Left ventricle myocardium inferior (tissue), 1 donor: ENCODE measurements at regions of chr12 and their contacts with region 1.

Region 1: DNA sequence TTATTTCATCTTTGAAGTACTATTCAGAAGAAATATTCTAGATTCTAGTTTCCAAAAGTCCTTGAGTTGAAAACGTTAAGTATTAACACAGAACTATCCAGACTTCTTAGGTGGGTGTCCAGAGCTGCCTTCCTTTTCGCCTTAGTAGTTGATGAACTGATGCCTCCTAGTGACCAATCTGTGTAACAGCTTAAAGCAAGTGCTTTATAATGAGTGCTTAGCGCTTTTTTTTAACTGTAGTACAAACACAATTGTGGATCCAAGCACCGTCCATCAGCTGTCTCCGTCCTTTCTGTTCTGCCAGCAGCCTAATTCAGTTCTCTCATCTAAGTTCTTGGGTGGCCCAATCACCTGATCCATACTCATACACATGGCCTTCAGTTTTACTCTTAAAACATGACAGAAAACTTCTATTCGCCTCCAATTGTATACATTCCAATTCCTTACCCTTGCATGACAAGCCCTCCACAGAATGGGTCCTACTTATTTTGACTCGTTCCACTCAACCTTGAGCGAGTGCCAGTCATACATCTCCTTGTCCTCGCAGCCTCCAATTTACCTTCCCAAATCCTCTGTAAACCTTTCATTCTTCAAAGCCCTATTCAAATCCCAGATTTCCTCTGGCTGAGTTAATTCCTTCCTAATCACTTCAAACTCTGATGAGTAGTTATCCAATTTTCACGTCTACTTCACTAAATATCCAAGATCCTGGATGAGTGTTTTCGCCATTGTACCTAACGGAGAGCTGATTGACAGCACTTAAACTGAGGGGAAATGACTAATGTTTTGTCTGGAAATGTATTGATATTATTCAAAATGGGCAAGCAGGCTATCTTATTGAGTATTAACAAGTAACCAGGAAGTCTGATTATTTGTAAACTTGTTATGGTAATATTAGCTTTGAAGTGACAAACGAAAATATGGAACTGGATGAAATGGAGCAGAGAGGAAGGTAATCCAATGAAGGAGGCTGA is 5.8 kb upstream of the PHLDA1 start:
- DNase-seq: no peak
- H3K4me3 ChIP-seq: no peak overlapping the region
- H3K27ac ChIP-seq: no peak overlapping the region
- H3K4me1 ChIP-seq: peaks cover 19% of the 10 kb centered on the region
- H3K27me3 ChIP-seq: no peaks in the 10 kb centered on the region
- CTCF ChIP-seq: peak; percentile 91

Region 2: GRCh38 chr12:75526655-75527511 is 510.5 kb before region 1 on chr12:
- intact Hi-C with region 1: loop called (anchors 2 kb)
- DNase-seq: no peak
- H3K4me3 ChIP-seq: no peak overlapping the region
- H3K27ac ChIP-seq: no peak overlapping the region
- H3K4me1 ChIP-seq: peaks cover 4% of the 10 kb centered on the region
- H3K27me3 ChIP-seq: peaks cover 6% of the 10 kb centered on the region
- CTCF ChIP-seq: peak; percentile 76

Region 3: GRCh38 chr12:76106631-76107030 is 69.2 kb after region 1 on chr12:
- intact Hi-C with region 1: no loop called
- DNase-seq: no peak
- H3K4me3 ChIP-seq: no peak overlapping the region
- H3K27ac ChIP-seq: no peak overlapping the region
- H3K4me1 ChIP-seq: no peaks in the 10 kb centered on the region
- H3K27me3 ChIP-seq: no peaks in the 10 kb centered on the region
- CTCF ChIP-seq: no peak

Region 4: DNA sequence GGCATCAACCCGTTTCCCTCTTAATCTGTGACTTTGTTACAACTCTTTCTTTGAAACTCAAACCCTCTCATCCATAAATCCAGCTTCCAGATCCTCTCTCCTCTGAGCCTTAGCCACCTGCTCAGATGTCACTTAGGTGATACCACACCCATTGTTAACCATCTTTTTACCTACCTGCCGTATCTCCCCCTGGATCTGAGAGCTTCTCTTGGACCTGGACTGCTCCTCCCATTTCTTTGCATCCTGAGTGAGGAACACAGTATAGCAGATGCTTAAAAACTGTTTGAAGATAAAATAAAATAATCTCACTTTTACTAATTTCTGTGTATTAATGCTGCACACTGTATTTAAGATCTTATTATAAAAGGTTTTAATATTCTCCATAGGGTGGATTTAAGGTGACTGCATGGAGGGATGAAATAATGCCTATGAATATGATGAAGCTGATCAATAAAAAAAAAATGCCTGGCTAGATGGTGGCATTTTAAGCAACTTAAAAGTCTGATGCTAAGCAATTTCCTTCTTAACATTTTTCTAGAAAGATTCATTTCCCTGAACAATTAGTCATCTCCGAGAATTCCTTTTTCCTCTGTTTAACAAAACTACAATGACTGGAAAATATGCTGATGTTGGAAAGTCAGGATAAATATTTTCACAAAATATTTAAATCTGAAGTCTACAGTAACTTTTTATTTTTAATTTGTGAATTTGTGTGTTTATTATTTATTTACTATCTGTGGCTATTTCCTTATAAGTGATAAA is 86.2 kb after region 1 on chr12:
- intact Hi-C with region 1: no loop called
- DNase-seq: no peak
- H3K4me3 ChIP-seq: no peak overlapping the region
- H3K27ac ChIP-seq: no peak overlapping the region
- H3K4me1 ChIP-seq: no peaks in the 10 kb centered on the region
- H3K27me3 ChIP-seq: no peaks in the 10 kb centered on the region
- CTCF ChIP-seq: no peak